Activated CD8-positive, alpha-beta T cell treated with anti-CD3 and anti-CD28 coated beads for 36 hours (primary cell): ENCODE measurements at regions of chr19 and their contacts with region 1.

Region 1: DNA sequence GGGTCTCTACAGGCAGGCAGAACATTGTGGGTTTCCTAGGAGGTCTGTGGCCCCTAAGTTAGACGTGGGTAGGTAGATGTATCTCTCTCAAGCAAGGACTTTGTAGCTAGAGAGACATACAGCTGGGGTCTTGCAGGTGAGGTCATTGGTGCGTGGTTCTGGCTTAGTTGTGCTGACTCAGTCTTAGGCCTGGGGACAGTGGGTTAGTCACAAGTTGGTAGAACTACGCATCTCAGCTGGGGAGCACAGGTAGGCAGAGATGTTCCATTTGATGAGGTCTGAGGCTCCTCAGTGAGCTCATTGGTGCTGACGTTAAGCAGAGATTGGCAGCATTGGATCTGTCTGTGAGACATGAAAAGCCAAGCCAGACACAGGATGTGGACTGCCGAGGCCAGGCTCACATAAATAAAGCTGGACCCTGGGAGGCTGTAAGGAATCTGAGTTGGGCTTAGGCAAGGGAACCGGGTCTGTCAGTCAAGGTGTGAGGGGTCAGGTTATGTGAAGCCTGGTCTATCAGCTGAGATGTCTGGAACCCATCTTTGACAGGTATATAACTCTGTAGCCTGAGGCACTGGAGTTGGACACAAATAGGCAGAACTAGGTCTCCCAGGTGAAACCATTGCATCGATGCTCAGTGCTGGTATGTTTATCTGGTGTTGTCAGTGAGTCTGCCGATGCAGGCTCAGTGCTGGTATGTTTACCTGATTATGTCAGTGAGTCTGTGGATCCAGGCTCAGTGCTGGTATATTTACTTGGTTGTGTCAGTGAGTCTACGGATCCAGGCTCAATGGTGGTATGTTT is 17.4 kb upstream of the PDCD2L start:
- DNase-seq: no peak
- ATAC-seq: peak; percentile 19
- H3K4me3 Mint-ChIP-seq: no peak overlapping the region
- H3K27ac Mint-ChIP-seq: no peak overlapping the region
- H3K4me1 Mint-ChIP-seq: no peaks in the 10 kb centered on the region
- H3K27me3 Mint-ChIP-seq: no peaks in the 10 kb centered on the region
- CTCF ChIP-seq: no peak

Region 2: GRCh38 chr19:34359140-34359953 is 27.5 kb before region 1 on chr19:
- CTCF ChIA-PET with region 1: interaction called, 3 read pairs
- POLR2A ChIA-PET with region 1: interaction called, 151 read pairs
- intact Hi-C with region 1: no loop called
- DNase-seq: peak; percentile 99
- ATAC-seq: peak; percentile 93
- H3K4me3 Mint-ChIP-seq: peak overlapping the region; percentile 78
- H3K27ac Mint-ChIP-seq: peak overlapping the region; percentile 97
- H3K4me1 Mint-ChIP-seq: peaks cover 49% of the 10 kb centered on the region
- H3K27me3 Mint-ChIP-seq: no peaks in the 10 kb centered on the region
- CTCF ChIP-seq: peak; percentile 48

Region 3: GRCh38 chr19:34364830-34365462 is 21.9 kb before region 1 on chr19 and contains the start of gene GPI:
- CTCF ChIA-PET with region 1: no interaction called
- POLR2A ChIA-PET with region 1: interaction called, 151 read pairs
- intact Hi-C with region 1: no loop called
- DNase-seq: peak; percentile 77
- ATAC-seq: peak; percentile 88
- H3K4me3 Mint-ChIP-seq: peak within 1 kb of the TSS; percentile 100
- H3K27ac Mint-ChIP-seq: peak within 1 kb of the TSS; percentile 93
- H3K4me1 Mint-ChIP-seq: peaks cover 57% of the 10 kb centered on the region
- H3K27me3 Mint-ChIP-seq: no peaks in the 10 kb centered on the region
- CTCF ChIP-seq: no peak
- total RNA-seq, gene GPI: 847 to 870 TPM

Region 4: GRCh38 chr19:34373601-34374288 is 13.1 kb before region 1 on chr19:
- CTCF ChIA-PET with region 1: interaction called, 3 read pairs
- POLR2A ChIA-PET with region 1: interaction called, 151 read pairs
- intact Hi-C with region 1: no loop called
- DNase-seq: no peak
- ATAC-seq: peak; percentile 20
- H3K4me3 Mint-ChIP-seq: no peak overlapping the region
- H3K27ac Mint-ChIP-seq: peak overlapping the region; percentile 62
- H3K4me1 Mint-ChIP-seq: peaks cover 33% of the 10 kb centered on the region
- H3K27me3 Mint-ChIP-seq: no peaks in the 10 kb centered on the region
- CTCF ChIP-seq: no peak

Region 5: GRCh38 chr19:34404109-34404897 is 17.5 kb after region 1 on chr19 and contains the start of gene PDCD2L:
- CTCF ChIA-PET with region 1: no interaction called
- POLR2A ChIA-PET with region 1: interaction called, 24 read pairs
- intact Hi-C with region 1: no loop called
- DNase-seq: peak; percentile 98
- ATAC-seq: peak; percentile 95
- H3K4me3 Mint-ChIP-seq: peak within 1 kb of the TSS; percentile 87
- H3K27ac Mint-ChIP-seq: peak within 1 kb of the TSS; percentile 88
- H3K4me1 Mint-ChIP-seq: peaks cover 15% of the 10 kb centered on the region
- H3K27me3 Mint-ChIP-seq: no peaks in the 10 kb centered on the region
- CTCF ChIP-seq: no peak
- total RNA-seq, gene PDCD2L: 39.9 to 42.1 TPM